SK-N-SH (cell line): ENCODE measurements at regions of chr5 and their contacts with region 1.

Region 1: DNA sequence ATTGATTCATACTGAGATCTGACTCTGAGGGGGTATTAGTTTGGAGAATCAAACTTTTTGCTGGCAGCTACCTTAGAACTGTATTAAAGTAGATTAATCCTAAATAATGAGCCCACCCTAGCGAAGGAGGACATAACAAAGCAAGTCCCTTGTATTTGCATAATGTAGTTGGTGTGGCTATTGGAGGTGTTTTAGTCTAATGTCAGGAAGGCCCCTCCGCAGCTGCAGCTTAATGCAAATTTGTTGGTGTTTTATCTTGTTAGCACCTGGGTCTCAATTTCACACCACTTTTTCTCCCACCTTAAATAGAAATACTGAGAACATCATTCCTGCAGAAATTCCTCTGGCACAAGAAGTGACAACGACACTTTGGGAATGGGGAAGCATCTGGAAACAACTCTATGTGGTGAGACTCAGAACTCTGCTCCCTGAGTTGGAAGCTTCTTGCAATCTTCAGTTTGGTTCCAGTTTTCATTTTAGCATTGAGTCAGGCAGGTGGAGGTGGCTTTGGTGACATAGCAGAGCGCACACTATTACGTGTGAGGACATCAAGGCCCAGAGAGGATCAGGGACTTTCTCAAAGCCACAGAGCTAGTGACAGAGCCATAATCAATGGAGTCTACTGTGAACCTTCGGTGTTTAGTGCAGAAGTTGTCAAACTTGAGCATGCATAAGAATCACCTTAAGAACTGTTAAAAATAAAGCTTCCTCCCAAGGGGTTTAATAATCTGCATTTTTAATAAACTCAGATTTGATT is 33.9 kb downstream of the DOCK2 start:
- DNase-seq: no peak
- H3K4me3 ChIP-seq: no peak overlapping the region
- H3K27ac ChIP-seq: no peak overlapping the region
- H3K4me1 ChIP-seq: peaks cover 11 to 13% of the 10 kb centered on the region in 2 experiments; a peak in 3 of 4 replicates
- H3K27me3 ChIP-seq: no peaks in the 10 kb centered on the region
- CTCF ChIP-seq: no peak
- EP300 ChIP-seq: no peak
- RAD21 ChIP-seq: no peak

Region 2: GRCh38 chr5:169656125-169656901 is 14.6 kb before region 1 on chr5:
- CTCF ChIA-PET with region 1: interaction called, 10 read pairs
- POLR2A ChIA-PET with region 1: no interaction called
- DNase-seq: no peak
- H3K4me3 ChIP-seq: no peak overlapping the region
- H3K27ac ChIP-seq: no peak overlapping the region
- H3K4me1 ChIP-seq: peaks cover 10 to 11% of the 10 kb centered on the region in 2 experiments; a peak in 3 of 4 replicates
- H3K27me3 ChIP-seq: no peaks in the 10 kb centered on the region
- CTCF ChIP-seq: no peak
- EP300 ChIP-seq: no peak
- RAD21 ChIP-seq: no peak